ENCODE measurements at regions of chr15 and their contacts with region 1.

Region 1: GRCh38 chr15:52256366-52256765 is 39.2 kb downstream of the MYO5C start:
- DNase-seq: peak; percentile 87
- ATAC-seq: peak; percentile 64
- H3K4me3 Mint-ChIP-seq: peak overlapping the region; percentile 57
- H3K27ac Mint-ChIP-seq: peak overlapping the region; percentile 80
- H3K4me1 Mint-ChIP-seq: peaks cover 49% of the 10 kb centered on the region
- H3K27me3 Mint-ChIP-seq: no peaks in the 10 kb centered on the region

Region 2: GRCh38 chr15:52241489-52241888 is 14.9 kb before region 1 on chr15:
- CTCF ChIA-PET with region 1: interaction called, 13 read pairs
- DNase-seq: no peak
- ATAC-seq: peak; percentile 39
- H3K4me3 Mint-ChIP-seq: no peak overlapping the region
- H3K27ac Mint-ChIP-seq: peak overlapping the region; percentile 76
- H3K4me1 Mint-ChIP-seq: peaks cover 7% of the 10 kb centered on the region
- H3K27me3 Mint-ChIP-seq: peaks cover 1% of the 10 kb centered on the region

Region 3: DNA sequence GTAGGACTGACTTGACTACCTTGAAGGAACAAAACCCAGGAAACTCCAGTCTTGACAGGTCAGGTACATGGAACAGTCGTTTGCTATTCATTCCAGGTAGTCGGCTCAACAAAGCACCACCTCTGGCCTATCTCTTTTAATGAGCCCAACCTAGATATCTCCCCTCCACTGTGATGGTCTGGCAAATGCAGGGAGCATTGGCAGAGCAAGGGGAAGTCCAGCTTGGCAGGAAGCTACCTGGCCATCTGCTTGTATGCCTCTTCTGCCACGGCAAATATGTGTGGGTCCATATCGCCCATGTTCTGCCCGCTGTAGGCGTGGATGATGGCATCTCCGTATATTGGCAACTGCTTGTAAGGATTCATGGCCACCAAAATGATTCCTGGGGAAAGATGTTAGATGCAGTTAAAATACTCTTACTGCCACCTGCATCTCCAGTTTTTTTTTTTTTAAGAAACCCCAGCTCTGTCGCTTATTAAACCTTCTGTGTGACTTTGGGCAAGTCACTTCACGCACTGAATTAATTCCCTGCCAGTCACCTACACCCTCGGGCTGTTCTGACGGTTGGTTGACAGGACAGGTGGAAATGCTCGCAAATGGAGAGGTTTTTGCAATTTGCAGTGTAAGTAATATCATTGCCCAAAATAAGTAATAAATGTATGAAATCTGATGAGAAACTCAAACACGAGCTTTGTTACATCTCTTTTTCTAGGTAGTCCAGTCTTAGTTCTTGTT is 22.4 kb after region 1 on chr15:
- CTCF ChIA-PET with region 1: interaction called, 10 read pairs
- DNase-seq: peak; percentile 30
- ATAC-seq: no peak
- H3K4me3 Mint-ChIP-seq: no peak overlapping the region
- H3K27ac Mint-ChIP-seq: no peak overlapping the region
- H3K4me1 Mint-ChIP-seq: no peaks in the 10 kb centered on the region
- H3K27me3 Mint-ChIP-seq: peaks cover 11% of the 10 kb centered on the region

Region 4: DNA sequence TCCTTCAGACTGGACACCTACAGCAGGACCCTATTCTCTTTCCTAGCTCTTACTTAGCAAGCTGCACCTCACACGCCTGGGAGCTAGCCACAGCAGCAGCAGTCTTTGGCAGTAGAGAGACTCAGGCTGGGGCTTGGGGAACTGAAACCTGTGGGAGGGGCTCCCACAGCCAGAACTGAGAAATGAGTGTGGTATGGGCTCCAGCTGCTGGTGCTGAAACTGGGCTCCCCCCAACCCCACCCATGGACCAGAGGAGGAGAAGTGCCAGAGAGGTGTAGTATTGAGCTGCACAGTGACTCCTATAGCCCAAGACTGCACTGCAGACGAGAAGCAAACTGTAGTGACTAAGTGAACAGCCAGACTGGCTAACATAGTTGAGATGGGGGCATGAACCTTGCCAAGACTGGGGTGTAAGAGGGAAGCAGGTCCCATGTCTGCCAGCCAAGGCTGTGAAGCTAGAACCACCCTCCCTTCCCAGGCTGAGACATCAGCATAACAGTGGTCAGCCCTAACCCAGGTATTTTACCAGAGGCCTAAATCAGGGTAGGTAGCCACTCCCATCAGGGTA is 209.9 kb after region 1 on chr15:
- CTCF ChIA-PET with region 1: interaction called, 19 read pairs
- DNase-seq: peak; percentile 83
- ATAC-seq: peak; percentile 79
- H3K4me3 Mint-ChIP-seq: no peak overlapping the region
- H3K27ac Mint-ChIP-seq: peak overlapping the region; percentile 73
- H3K4me1 Mint-ChIP-seq: peaks cover 44% of the 10 kb centered on the region
- H3K27me3 Mint-ChIP-seq: no peaks in the 10 kb centered on the region

Region 5: DNA sequence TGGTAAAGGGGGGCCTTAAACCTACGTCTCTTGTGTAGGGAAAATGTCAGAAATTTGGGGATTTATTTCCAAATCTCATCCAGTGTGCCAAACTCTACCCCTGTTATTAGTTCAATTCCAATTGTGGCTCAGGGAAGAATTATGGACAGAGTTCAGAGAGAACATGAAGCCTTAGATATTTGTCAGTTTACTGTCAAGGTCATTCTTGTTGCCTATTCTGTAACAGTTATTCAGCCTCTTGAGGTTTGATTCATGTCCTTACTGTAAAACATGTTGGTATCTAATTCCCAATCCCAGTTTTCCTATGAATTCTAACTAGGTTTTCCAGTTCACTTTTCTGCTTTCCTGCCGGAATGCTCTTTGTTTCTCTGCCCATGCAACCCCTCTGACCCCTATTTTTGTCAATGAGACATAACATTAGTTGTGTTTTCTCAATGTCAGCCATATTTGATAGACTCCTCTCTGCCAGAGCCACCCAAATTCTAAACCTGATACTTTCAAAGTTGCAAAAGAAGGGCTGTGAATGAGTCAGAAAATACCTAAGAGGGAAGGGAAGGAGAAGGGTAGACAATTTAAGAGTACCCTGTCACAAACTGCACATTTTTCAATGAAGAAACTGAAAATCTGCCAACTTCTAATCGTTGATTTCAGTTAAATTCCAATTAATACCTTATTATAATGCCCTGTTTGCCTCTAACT is 370.5 kb after region 1 on chr15:
- CTCF ChIA-PET with region 1: no interaction called
- DNase-seq: no peak
- ATAC-seq: no peak
- H3K4me3 Mint-ChIP-seq: no peak overlapping the region
- H3K27ac Mint-ChIP-seq: no peak overlapping the region
- H3K4me1 Mint-ChIP-seq: peaks cover 22% of the 10 kb centered on the region
- H3K27me3 Mint-ChIP-seq: no peaks in the 10 kb centered on the region